AG04449 (cell line): ENCODE measurements at regions of chr15 and their contacts with region 1.

Region 1: GRCh38 chr15:44663409-44664308 is at the start of gene SPG11:
- DNase-seq: peak; percentile 81
- H3K4me3 ChIP-seq: peak within 1 kb of the TSS; percentile 86
- CTCF ChIP-seq: peak; percentile 89

Region 2: DNA sequence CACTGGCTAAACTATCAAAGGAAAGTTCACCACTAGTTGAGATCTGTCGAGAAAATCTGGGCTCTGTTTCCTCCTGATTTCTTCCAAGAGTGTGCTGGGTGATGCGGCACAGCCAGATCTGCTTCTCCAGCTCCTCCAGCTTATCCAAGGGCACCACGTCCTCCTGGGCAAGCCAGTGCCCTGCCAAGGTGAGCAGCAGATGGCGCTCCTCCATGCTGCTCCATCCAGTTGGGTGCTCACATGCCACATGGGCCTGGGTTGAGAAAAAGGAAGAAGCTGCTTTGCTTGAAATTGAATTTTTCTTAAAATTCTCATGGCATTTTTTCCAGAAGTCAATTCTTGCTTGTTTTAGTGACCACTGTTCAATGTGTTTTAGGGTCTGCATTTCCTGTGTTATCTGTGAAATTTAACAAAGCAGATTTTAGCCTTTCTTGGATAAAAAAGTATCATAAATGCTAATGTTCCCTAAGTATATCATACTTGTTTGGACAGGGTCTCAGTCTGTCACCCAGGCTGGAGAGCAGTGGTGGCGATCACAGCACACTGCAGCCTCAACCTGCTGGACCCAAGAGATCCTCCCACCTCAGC is 79.4 kb before region 1 on chr15:
- CTCF ChIA-PET with region 1: interaction called, 12 read pairs
- POLR2A ChIA-PET with region 1: no interaction called
- DNase-seq: no peak
- H3K4me3 ChIP-seq: no peak overlapping the region
- CTCF ChIP-seq: peak; percentile 50

Region 3: GRCh38 chr15:44676676-44677075 is 13.0 kb after region 1 on chr15:
- CTCF ChIA-PET with region 1: interaction called, 17 read pairs
- POLR2A ChIA-PET with region 1: interaction called, 3 read pairs
- DNase-seq: no peak
- H3K4me3 ChIP-seq: no peak overlapping the region
- CTCF ChIP-seq: no peak

Region 4: DNA sequence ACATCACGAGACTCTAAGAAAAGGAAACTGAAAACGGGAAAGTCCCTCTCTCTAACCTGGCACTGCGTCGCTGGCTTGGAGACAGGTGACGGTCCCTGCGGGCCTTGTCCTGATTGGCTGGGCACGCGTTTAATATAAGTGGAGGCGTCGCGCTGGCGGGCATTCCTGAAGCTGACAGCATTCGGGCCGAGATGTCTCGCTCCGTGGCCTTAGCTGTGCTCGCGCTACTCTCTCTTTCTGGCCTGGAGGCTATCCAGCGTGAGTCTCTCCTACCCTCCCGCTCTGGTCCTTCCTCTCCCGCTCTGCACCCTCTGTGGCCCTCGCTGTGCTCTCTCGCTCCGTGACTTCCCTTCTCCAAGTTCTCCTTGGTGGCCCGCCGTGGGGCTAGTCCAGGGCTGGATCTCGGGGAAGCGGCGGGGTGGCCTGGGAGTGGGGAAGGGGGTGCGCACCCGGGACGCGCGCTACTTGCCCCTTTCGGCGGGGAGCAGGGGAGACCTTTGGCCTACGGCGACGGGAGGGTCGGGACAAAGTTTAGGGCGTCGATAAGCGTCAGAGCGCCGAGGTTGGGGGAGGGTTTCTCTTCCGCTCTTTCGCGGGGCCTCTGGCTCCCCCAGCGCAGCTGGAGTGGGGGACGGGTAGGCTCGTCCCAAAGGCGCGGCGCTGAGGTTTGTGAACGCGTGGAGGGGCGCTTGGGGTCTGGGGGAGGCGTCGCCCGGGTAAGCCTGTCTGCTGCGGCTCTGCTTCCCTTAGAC is 47.9 kb after region 1 on chr15 and contains the start of gene B2M:
- CTCF ChIA-PET with region 1: interaction called, 22 read pairs
- POLR2A ChIA-PET with region 1: interaction called, 24 read pairs
- DNase-seq: peak; percentile 83
- H3K4me3 ChIP-seq: peak within 1 kb of the TSS; percentile 99
- CTCF ChIP-seq: no peak

Region 5: DNA sequence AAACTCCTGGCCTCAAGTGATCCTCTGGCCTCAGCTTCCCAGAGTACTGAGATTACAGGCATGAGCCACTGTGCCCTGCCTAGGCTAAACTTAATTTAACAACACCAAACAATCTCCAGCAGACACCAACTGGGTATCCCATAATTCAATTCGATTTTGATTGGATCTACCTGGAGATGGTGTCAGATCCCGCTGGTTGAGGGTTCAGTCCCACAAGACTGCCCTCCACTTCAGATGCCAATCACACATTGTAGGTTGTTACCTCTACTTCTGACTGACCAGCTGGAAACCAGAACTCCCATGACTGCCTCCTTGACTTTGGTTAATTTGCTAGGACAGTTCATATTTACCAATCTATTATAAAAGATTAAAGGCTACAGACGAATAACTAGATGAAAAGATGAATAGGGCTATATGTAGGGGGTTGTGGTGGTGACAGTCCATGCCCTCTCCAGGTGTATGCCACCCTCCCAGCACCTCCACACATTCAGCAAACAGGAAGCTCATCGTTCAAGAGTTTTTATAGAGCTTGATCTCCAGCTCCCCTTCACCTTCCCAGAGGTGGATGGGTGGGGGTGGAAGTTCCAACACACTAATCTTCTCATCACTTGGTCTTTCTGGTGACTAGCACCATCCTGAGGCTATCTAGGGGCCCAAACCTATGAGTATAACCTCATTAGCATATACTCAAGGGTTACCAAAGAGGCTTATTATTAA is 57.0 kb after region 1 on chr15:
- CTCF ChIA-PET with region 1: interaction called, 22 read pairs
- POLR2A ChIA-PET with region 1: no interaction called
- DNase-seq: no peak
- H3K4me3 ChIP-seq: no peak overlapping the region
- CTCF ChIP-seq: no peak

Region 6: GRCh38 chr15:44728576-44729407 is 65.1 kb after region 1 on chr15:
- CTCF ChIA-PET with region 1: interaction called, 153 read pairs
- POLR2A ChIA-PET with region 1: interaction called, 11 read pairs
- DNase-seq: peak; percentile 91
- H3K4me3 ChIP-seq: peak overlapping the region; percentile 83
- CTCF ChIP-seq: no peak

Region 7: GRCh38 chr15:45134682-45135604 is 471.3 kb after region 1 on chr15:
- CTCF ChIA-PET with region 1: no interaction called
- POLR2A ChIA-PET with region 1: no interaction called
- DNase-seq: no peak
- H3K4me3 ChIP-seq: no peak overlapping the region
- CTCF ChIP-seq: no peak

Region 8: GRCh38 chr15:45265506-45265905 is 601.8 kb after region 1 on chr15:
- CTCF ChIA-PET with region 1: no interaction called
- POLR2A ChIA-PET with region 1: no interaction called
- DNase-seq: no peak
- H3K4me3 ChIP-seq: no peak overlapping the region
- CTCF ChIP-seq: no peak